Right ventricle myocardium inferior (tissue), 1 donor: ENCODE measurements at regions of chrX and their contacts with region 1.

Region 1: DNA sequence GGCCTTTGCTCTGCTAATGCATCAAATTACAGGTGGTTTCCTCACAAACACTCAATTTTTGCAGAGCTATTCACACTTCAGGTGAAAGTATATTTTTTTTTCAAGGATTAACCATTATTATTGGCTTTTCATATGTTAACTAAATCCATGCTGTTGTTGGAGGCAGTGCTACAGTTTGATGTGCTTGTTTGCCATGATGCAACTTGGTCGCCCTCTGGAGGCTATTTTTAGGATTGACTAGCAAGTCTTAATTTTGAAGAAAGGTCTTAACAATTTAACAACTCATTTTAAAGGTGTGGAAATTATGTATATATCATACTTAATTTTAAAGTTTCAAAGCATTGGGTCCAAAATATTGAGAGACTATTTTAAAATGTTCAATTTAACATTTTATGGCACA is 168.8 kb upstream of the FAM47A start:
- DNase-seq: no peak
- ATAC-seq: no peak

Region 2: DNA sequence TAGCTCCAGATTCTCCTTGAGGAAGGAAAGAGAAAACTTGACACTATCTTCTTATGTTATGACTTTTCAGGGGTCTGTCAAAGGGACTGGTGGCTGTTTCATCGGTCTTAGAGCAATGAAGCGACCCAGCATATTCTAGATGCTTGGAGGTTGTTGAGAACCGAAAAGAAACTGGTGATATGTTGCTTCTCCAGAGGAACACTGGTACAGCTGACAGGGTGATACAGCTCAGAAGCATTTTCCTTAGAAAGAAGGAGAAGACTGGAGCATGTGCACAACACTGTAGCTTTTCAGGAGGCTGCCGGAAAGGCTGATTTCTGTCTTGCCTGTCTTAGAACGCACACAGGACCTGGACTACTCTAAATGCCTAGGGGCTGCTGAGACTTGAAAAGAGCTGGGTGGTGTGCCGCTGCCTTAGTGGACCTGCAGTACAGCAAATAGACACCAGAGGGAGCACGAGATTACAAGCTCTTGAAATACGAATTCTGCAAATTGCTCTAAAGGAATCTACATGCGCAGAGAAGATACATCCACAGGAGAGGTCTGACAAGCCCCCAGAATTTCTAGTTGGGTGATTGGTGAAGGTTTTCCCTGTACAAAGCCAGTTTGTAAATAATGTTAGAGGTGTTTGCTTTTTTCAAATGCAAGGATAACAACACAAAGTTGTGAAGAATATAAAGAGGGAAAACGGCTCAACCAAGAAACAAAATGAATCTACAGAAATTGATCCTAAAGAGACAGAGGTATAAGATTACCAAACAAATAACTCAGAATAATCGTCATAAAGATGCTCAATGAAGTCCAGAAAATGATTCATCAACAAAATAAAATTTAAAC is 866.4 kb before region 1 on chrX:
- intact Hi-C with region 1: loop called (anchors 5 kb)
- DNase-seq: no peak
- ATAC-seq: peak; percentile 52